CD14-positive monocyte (primary cell): ENCODE measurements at regions of chr6 and their contacts with region 1.

Region 1: DNA sequence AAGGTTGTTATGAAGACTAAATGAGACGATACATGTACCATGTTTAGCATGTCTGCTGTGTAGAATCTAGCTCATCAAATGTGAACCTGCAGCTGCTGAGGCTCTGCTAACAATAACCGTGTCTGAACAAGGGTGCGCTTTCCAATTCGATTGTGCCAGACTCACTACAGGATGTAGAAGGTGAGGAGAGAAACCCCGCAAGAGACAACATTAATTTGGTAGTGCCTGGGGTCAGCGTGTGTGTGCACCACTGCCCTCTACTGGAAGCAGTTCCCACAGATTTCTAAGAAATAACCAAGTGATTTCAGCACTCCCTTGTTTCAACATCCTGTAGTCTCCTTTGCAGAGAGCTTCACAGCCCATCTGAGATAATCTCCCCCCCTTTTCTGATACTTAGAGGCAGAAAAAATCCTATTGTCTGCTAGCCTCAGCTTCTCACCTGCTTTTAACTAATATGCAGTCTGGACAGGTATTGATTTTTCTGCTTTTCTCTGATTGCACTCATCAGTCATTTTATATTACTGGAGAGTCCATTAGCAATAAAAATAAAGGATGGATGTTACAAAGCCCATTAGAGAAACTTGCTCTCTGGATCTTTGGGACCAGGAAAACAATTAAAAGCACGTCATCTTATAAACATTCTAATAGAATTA is 96.7 kb upstream of the BACH2 start:
- DNase-seq: peak; percentile 40 to 73 (median 52)
- H3K4me3 ChIP-seq: no peak overlapping the region
- H3K4me3 Mint-ChIP-seq: no peak overlapping the region
- H3K27ac ChIP-seq: no peak overlapping the region
- H3K27ac Mint-ChIP-seq: no peak overlapping the region
- H3K4me1 ChIP-seq: no peaks in the 10 kb centered on the region
- H3K4me1 Mint-ChIP-seq: peaks cover 2% of the 10 kb centered on the region
- H3K27me3 ChIP-seq: no peaks in the 10 kb centered on the region
- H3K27me3 Mint-ChIP-seq: peaks cover 0 to 5% (median 3%) of the 10 kb centered on the region in 3 donors
- CTCF ChIP-seq: peak; percentile 75

Region 2: GRCh38 chr6:90478789-90479602 is 85.6 kb after region 1 on chr6:
- intact Hi-C with region 1: loop called in 1 of 2 experiments (anchors 10 kb)
- DNase-seq: peak; percentile 88 to 97 (median 91)
- H3K4me3 ChIP-seq: no peak overlapping the region
- H3K4me3 Mint-ChIP-seq: no peak overlapping the region
- H3K27ac ChIP-seq: peak overlapping the region in 1 of 2 donors; percentile 28
- H3K27ac Mint-ChIP-seq: peak overlapping the region; percentile 11 to 92 (median 83)
- H3K4me1 ChIP-seq: peaks cover 5 to 9% of the 10 kb centered on the region in 2 donors
- H3K4me1 Mint-ChIP-seq: peaks cover 8% of the 10 kb centered on the region
- H3K27me3 ChIP-seq: no peaks in the 10 kb centered on the region
- H3K27me3 Mint-ChIP-seq: peaks cover 0 to 2% (median 2%) of the 10 kb centered on the region in 3 donors
- CTCF ChIP-seq: peak; percentile 89